Heart left ventricle (tissue), 16 donors: ENCODE measurements at regions of chr5 and their contacts with region 1.

Region 1: GRCh38 chr5:14871210-14872069 is at the start of gene ANKH:
- DNase-seq: peak; percentile 87 to 90 (median 88)
- ATAC-seq: peak; percentile 52 to 93 (median 82)
- H3K4me3 ChIP-seq: peak within 1 kb of the TSS; percentile 75 to 97 (median 89)
- H3K27ac ChIP-seq: peak within 1 kb of the TSS; percentile 94 to 100 (median 98)
- H3K4me1 ChIP-seq: peaks cover 0 to 32% (median 17%) of the 10 kb centered on the region in 12 donors
- H3K27me3 ChIP-seq: peaks cover 0 to 4% (median 0%) of the 10 kb centered on the region in 9 donors
- CTCF ChIP-seq: peak in 2 of 12 donors; percentile 23 to 33
- POLR2A ChIP-seq: no peak
- total RNA-seq, gene ANKH: 87.1 to 260 (median 177) TPM

Region 2: GRCh38 chr5:14727428-14727865 is 144.0 kb before region 1 on chr5:
- intact Hi-C with region 1: loop called in 7 of 10 experiments (anchors 2 to 5 kb)
- DNase-seq: peak; percentile 79 to 90 (median 79)
- ATAC-seq: peak; percentile 60 to 78 (median 68)
- H3K4me3 ChIP-seq: no peak overlapping the region
- H3K27ac ChIP-seq: peak overlapping the region in 6 of 12 donors; percentile 8 to 65 (median 34)
- H3K4me1 ChIP-seq: peaks cover 0 to 41% (median 25%) of the 10 kb centered on the region in 12 donors
- H3K27me3 ChIP-seq: no peaks in the 10 kb centered on the region
- CTCF ChIP-seq: peak; percentile 90 to 99 (median 96)
- POLR2A ChIP-seq: no peak

Region 3: DNA sequence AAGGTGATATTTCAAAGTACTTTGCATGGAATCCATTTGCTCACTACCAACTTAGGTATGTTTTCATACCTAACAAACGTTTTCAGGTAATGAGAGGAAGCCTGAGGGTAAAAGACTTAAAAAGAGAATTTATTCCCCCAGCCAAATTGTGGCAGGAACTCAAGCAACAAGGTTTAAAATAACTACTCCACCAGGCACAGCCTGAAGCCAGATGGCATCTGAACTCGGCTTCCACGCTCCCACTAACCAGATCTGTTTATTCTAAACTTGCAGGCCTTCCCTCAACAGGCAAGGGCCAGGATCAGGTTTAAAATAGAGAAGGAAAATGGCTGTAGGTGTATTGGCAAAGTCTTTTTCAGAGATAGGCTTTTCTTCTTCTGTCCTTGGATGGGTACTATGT is 117.5 kb before region 1 on chr5:
- intact Hi-C with region 1: loop called in 2 of 10 experiments (anchors 5 to 10 kb)
- DNase-seq: no peak
- ATAC-seq: peak; percentile 71 to 80 (median 76)
- H3K4me3 ChIP-seq: no peak overlapping the region
- H3K27ac ChIP-seq: peak overlapping the region; percentile 40 to 88 (median 66)
- H3K4me1 ChIP-seq: peaks cover 0 to 35% (median 11%) of the 10 kb centered on the region in 12 donors
- H3K27me3 ChIP-seq: no peaks in the 10 kb centered on the region
- CTCF ChIP-seq: peak in 2 of 12 donors; percentile 5 to 14
- POLR2A ChIP-seq: no peak

Region 4: GRCh38 chr5:14830210-14831005 is 41.0 kb before region 1 on chr5:
- intact Hi-C with region 1: loop called in 2 of 10 experiments (anchors 1 to 5 kb)
- DNase-seq: peak in 1 of 5 donors; percentile 46
- ATAC-seq: peak; percentile 32 to 73 (median 60)
- H3K4me3 ChIP-seq: no peak overlapping the region
- H3K27ac ChIP-seq: no peak overlapping the region
- H3K4me1 ChIP-seq: peaks cover 5 to 54% (median 25%) of the 10 kb centered on the region in 12 donors
- H3K27me3 ChIP-seq: no peaks in the 10 kb centered on the region
- CTCF ChIP-seq: no peak
- POLR2A ChIP-seq: no peak

Region 5: GRCh38 chr5:14946815-14947640 is 75.6 kb after region 1 on chr5:
- intact Hi-C with region 1: loop called in 2 of 10 experiments (anchors 5 to 10 kb)
- DNase-seq: no peak
- ATAC-seq: peak; percentile 49 to 74 (median 62)
- H3K4me3 ChIP-seq: no peak overlapping the region
- H3K27ac ChIP-seq: no peak overlapping the region
- H3K4me1 ChIP-seq: peaks cover 0 to 10% (median 6%) of the 10 kb centered on the region in 12 donors
- H3K27me3 ChIP-seq: no peaks in the 10 kb centered on the region
- CTCF ChIP-seq: peak; percentile 14 to 59 (median 38)
- POLR2A ChIP-seq: no peak

Region 6: GRCh38 chr5:15634591-15635288 is 763.3 kb after region 1 on chr5:
- intact Hi-C with region 1: no loop called
- DNase-seq: no peak
- ATAC-seq: peak; percentile 24 to 72 (median 56)
- H3K4me3 ChIP-seq: no peak overlapping the region
- H3K27ac ChIP-seq: peak overlapping the region in 2 of 12 donors; percentile 11 to 16
- H3K4me1 ChIP-seq: peaks cover 0 to 44% (median 28%) of the 10 kb centered on the region in 12 donors
- H3K27me3 ChIP-seq: no peaks in the 10 kb centered on the region
- CTCF ChIP-seq: no peak
- POLR2A ChIP-seq: no peak